ENCODE measurements at regions of chrX and their contacts with region 1.

Region 1: DNA sequence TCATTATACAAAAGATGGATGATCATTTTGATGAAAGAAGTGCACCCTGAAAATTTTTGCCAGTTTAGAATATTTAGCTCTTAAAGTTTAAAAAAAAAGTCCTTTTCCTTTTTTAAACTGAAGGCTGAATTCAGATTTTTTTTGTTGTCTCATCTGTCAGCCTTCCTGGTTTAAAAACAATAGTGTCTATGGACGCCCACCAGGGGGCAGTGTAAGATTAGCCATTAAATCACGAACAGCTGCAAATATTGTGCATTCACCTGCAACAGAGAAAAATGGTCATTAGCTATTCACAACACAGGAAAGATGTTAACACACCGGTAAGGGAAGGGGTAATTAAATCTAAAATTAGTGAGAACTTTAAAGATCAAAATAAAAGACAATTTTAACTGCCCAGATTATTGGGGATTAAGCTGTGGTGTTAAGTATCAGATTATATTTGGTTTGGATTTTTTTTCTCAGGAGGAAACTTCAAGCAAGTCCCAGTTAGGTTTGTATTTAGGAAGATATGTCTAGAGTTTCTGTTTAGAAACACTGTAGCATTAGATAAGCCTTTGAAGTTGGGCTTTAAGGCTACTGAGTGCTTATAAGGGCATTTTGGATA is 4.4 kb upstream of the CXorf38 start:
- DNase-seq: peak; percentile 76

Region 2: DNA sequence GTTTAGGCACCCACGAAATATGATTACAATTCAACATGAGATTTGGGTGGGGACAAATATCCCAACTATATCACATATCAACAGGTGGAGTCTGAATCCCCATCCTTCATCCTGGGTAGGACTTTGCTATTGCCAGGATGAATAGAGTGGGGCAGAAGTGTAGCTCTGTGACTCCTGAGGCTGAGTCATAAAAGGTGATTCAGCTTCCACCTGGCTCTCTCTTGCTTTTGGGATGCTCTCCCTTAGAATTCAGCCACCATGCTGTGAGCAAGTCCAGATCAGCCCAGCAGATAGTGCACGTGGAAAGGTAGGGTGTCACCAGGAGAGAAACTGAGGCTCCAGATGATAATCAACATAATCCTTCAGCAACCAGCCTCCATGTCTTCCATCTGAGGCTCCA is 360.2 kb before region 1 on chrX:
- in situ Hi-C with region 1: no loop called
- DNase-seq: no peak

Region 3: GRCh38 chrX:40778861-40779575 is 127.3 kb after region 1 on chrX:
- in situ Hi-C with region 1: loop called (anchors 25 kb)
- DNase-seq: no peak